ENCODE measurements at regions of chr6 and their contacts with region 1.

Region 1: GRCh38 chr6:14953836-14954235 is 292.0 kb upstream of the JARID2 start:
- DNase-seq: no peak
- ATAC-seq: no peak
- H3K4me3 ChIP-seq: no peak overlapping the region
- H3K4me3 Mint-ChIP-seq: no peak overlapping the region
- H3K27ac ChIP-seq: no peak overlapping the region
- H3K27ac Mint-ChIP-seq: no peak overlapping the region
- H3K4me1 ChIP-seq: no peaks in the 10 kb centered on the region
- H3K4me1 Mint-ChIP-seq: no peaks in the 10 kb centered on the region
- H3K27me3 ChIP-seq: no peaks in the 10 kb centered on the region
- H3K27me3 Mint-ChIP-seq: no peaks in the 10 kb centered on the region

Region 2: DNA sequence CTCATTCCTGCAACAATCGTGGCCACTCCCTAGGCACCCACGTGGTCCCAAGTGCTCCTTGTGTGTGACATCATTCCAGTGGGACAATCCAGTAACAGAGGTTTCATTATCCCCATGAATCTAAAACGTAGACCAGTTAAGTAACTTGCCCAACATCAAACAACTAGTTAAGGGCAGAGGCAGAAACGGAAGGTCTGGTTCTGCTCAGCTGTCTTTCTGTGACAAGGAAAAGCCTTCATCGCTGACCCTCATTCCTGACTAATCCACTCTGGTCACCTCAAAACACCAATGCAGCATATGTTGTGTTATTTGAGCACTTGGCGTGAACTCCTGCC is 30.6 kb after region 1 on chr6:
- CTCF ChIA-PET with region 1: no interaction called
- POLR2A ChIA-PET with region 1: no interaction called
- DNase-seq: no peak
- ATAC-seq: no peak
- H3K4me3 ChIP-seq: no peak overlapping the region
- H3K4me3 Mint-ChIP-seq: no peak overlapping the region
- H3K27ac ChIP-seq: no peak overlapping the region
- H3K27ac Mint-ChIP-seq: no peak overlapping the region
- H3K4me1 ChIP-seq: no peaks in the 10 kb centered on the region
- H3K4me1 Mint-ChIP-seq: no peaks in the 10 kb centered on the region
- H3K27me3 ChIP-seq: peaks cover 0 to 9% of the 10 kb centered on the region in 2 experiments
- H3K27me3 Mint-ChIP-seq: peaks cover 13 to 14% of the 10 kb centered on the region in 2 donors

Region 3: DNA sequence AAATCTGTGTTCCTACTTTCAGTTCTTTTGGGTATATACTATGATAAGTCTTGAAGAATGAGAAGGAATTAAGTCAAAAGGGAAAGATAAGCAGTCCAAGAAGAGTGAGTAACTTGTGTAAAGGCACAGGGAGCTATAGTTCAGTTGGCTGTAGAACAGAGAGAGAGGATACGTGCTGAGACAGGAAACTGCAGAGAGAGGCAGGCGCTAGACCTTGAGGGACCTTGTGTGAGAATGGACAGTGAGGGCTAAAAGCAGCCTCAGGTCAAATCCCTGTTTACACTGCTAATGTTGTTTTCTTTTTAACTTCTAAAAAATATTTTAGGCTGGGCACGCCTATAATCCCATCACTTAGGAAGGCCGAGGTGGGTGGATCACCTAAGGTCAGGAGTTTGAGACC is 225.5 kb after region 1 on chr6:
- CTCF ChIA-PET with region 1: no interaction called
- POLR2A ChIA-PET with region 1: interaction called in 1 of 2 experiments, 10 read pairs
- DNase-seq: no peak
- ATAC-seq: no peak
- H3K4me3 ChIP-seq: no peak overlapping the region
- H3K4me3 Mint-ChIP-seq: no peak overlapping the region
- H3K27ac ChIP-seq: no peak overlapping the region
- H3K27ac Mint-ChIP-seq: no peak overlapping the region
- H3K4me1 ChIP-seq: peaks cover under 1 to 2% of the 10 kb centered on the region in 2 experiments
- H3K4me1 Mint-ChIP-seq: peaks cover 4 to 8% (median 5%) of the 10 kb centered on the region in 3 donors
- H3K27me3 ChIP-seq: no peaks in the 10 kb centered on the region
- H3K27me3 Mint-ChIP-seq: no peaks in the 10 kb centered on the region

Measured in T-cell (primary cell).